ENCODE measurements at regions of chr12 and their contacts with region 1.

Region 1: DNA sequence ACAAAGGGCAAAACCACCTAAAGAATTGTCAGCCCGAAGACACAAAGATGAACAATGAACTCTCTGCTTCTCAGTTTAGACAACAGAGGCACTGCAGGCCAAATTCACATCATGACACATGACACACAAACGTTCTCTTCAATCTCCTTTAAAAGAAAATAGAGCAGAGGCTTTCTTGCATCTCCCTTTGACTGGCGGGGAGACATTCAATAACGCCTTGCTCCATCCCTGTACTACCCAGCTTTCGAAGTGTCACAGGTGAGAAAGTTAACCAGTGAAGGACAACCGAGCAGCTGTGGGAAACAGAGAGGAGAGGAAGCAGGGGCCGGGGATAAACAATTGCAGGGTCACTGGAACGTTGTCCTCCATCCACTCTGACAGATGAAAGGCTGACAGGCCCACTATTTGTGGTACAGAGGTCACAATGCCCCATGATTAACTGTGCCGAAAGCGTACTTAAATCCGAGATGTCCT is 130.8 kb downstream of the PHLDA1 start:
- DNase-seq: no peak

Region 2: DNA sequence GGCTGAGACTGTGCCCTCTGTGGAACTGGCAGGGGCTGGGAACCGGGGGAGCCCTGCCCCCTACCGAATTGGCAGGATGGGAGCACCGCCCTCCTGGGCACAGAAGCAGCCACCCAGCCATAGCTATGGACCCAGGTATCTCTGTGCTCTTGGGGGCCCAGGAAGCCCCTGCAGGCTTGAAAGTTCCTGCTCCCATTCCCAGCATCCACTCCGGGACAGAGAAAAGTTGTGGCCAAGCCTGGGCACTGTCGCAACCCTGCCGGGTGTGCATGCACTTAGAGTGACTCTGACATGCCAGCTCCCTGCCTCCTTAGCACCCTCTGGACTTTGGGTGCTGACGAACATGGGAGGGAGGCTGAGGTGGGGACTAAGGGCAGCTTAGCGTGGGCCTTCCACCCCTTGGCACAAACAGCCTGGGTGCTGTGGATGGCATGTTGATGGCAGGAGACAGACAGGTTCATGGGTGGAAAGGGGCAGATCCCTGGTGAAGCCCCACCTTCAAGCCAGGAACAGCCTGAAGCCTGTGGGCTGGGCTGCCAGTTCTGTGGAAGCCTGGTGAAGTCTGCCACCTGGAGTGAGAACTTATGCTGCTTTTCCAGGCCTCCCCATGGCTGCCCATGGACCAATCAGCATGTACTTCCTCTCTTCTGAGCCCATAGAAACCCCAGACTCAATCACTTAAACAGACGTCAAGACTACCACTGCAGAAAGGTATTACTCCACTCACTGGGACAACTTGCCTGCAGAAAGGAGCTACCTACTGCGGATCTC is 1084.2 kb before region 1 on chr12:
- intact Hi-C with region 1: no loop called
- DNase-seq: peak; percentile 64

Region 3: DNA sequence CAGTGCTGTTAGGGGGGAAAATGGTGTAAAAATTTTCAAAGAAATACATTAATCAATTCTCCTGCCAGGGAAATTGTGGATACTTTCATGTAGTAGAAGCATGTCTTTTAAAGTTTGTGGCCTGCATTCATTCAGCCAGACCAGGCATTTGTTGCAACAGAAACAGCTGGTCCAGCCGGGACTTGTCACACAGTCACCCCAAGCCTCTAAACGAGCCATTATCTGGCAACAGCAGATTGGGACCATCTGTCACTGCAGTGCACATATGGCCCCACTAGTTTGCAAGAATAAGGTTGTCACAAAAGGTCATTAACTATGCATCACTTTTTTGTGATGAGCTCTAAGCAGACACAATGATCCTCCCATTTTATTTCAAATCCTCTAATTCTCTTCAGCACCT is 63.1 kb before region 1 on chr12:
- intact Hi-C with region 1: loop called in 1 of 2 experiments (anchors 2 kb)
- DNase-seq: no peak

Measured in posterior vena cava (tissue), 2 donors.